Gastrocnemius medialis (tissue), 4 donors: ENCODE measurements at regions of chr16 and their contacts with region 1.

Region 1: GRCh38 chr16:76653390-76654026 is 376.3 kb downstream of the CNTNAP4 start:
- DNase-seq: no peak
- ATAC-seq: no peak
- H3K4me3 ChIP-seq: no peak overlapping the region
- H3K27ac ChIP-seq: no peak overlapping the region
- H3K4me1 ChIP-seq: no peaks in the 10 kb centered on the region
- H3K27me3 ChIP-seq: no peaks in the 10 kb centered on the region
- CTCF ChIP-seq: no peak
- POLR2A ChIP-seq: no peak

Region 2: GRCh38 chr16:76287466-76287865 is 366.0 kb before region 1 on chr16:
- in situ Hi-C with region 1: no loop called
- intact Hi-C with region 1: no loop called
- DNase-seq: no peak
- ATAC-seq: no peak
- H3K4me3 ChIP-seq: no peak overlapping the region
- H3K27ac ChIP-seq: no peak overlapping the region
- H3K4me1 ChIP-seq: no peaks in the 10 kb centered on the region
- H3K27me3 ChIP-seq: no peaks in the 10 kb centered on the region
- CTCF ChIP-seq: no peak
- POLR2A ChIP-seq: no peak

Region 3: DNA sequence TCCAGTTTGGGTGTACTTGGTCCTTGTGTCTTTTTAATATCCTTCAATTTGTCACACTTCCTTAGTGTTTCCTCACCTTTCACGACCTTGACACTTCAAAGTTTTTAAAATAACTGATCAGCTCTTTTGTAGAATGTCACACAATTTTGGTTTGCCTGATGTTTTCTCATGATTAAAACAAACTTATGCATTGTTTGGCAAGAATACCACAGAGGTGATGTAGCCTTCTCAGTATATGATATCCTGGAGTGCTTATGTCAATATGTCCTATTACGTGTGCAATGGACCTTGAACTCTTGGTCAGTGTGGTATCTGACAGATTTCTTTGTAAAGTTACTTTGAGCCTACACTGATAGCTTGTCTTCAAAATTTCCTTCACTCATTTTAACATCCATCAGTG is 78.9 kb before region 1 on chr16:
- in situ Hi-C with region 1: loop called in 1 of 4 experiments (anchors 25 kb)
- intact Hi-C with region 1: no loop called
- DNase-seq: no peak
- ATAC-seq: no peak
- H3K4me3 ChIP-seq: no peak overlapping the region
- H3K27ac ChIP-seq: no peak overlapping the region
- H3K4me1 ChIP-seq: no peaks in the 10 kb centered on the region
- H3K27me3 ChIP-seq: no peaks in the 10 kb centered on the region
- CTCF ChIP-seq: no peak
- POLR2A ChIP-seq: no peak

Region 4: DNA sequence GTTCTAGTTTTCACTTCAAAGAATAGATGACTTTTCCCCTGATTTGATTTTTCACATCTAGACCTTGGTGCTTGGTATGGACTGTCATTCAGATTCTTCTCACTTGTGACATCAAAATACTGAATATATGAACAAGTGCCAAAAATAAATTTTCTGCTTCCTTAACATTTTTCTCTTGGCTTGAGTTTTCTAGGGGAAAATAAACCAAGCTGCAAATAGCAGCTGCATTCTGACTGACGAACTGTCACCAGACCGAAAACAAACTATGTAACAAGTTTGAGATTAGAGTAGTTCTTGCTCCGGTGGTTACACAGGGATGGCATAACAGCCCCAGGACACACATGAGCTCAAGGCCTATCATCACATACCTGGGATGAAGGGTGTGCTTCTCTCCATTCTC is 30.6 kb before region 1 on chr16:
- in situ Hi-C with region 1: no loop called
- intact Hi-C with region 1: no loop called
- DNase-seq: no peak
- ATAC-seq: no peak
- H3K4me3 ChIP-seq: no peak overlapping the region
- H3K27ac ChIP-seq: no peak overlapping the region
- H3K4me1 ChIP-seq: no peaks in the 10 kb centered on the region
- H3K27me3 ChIP-seq: no peaks in the 10 kb centered on the region
- CTCF ChIP-seq: no peak
- POLR2A ChIP-seq: no peak